Dorsolateral prefrontal cortex (tissue), 120 donors: ENCODE measurements at regions of chr2 and their contacts with region 1.

Region 1: GRCh38 chr2:48727565-48727964 is 28.0 kb downstream of the LHCGR start:
- DNase-seq: no peak
- H3K4me3 ChIP-seq: no peak overlapping the region
- H3K27ac ChIP-seq: no peak overlapping the region
- H3K27me3 ChIP-seq: no peaks in the 10 kb centered on the region
- CTCF ChIP-seq: peak in 17 of 56 donors; percentile 26 to 65 (median 47)

Region 2: GRCh38 chr2:48440103-48440390 is 287.5 kb before region 1 on chr2:
- intact Hi-C with region 1: no loop called
- DNase-seq: no peak
- H3K4me3 ChIP-seq: peak overlapping the region; percentile 70 to 100 (median 97)
- H3K27ac ChIP-seq: peak overlapping the region; percentile 47 to 99 (median 96)
- H3K27me3 ChIP-seq: no peaks in the 10 kb centered on the region
- CTCF ChIP-seq: no peak

Region 3: GRCh38 chr2:48600204-48600813 is 127.3 kb before region 1 on chr2:
- intact Hi-C with region 1: loop called (anchors 1 to 2 kb)
- DNase-seq: peak in 1 of 10 donors; percentile 6
- H3K4me3 ChIP-seq: no peak overlapping the region
- H3K27ac ChIP-seq: peak overlapping the region in 13 of 59 donors; percentile 3 to 72 (median 27)
- H3K27me3 ChIP-seq: no peaks in the 10 kb centered on the region
- CTCF ChIP-seq: peak; percentile 68 to 96 (median 81)

Region 4: DNA sequence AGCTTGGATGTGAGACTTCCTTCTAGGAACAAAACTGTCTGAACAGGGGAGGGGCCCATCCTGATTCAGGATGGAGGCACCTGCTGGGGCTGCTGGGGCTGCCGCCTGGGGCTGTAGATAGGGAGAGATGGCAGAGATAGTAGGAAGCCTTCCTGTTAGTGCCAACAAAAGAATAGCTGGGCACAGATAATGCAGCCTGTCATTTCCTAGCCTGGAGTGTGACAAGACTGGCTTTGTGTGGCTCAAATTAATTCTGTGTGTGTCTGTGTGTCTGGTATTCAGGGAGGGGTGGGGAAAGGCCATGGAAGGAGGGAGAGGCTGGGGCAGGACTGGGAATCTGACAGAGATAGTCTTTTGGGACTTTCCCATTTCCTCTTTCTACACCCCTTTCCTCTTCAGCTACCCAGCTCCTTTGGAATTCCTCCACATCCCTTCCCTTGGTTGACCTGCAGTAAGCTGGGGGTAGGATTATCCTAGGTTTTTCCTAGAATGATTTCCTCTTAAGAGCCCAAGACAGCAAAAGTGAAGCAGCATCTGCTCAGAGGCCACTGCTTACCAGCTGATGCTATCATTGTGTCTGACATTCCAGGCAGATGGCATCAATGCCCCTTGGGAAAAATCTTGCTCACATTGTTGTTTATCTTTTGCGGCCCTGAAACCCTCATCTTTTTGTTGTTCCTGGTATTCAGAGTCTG is 172.9 kb after region 1 on chr2:
- intact Hi-C with region 1: loop called in 1 of 2 experiments (anchors 10 kb)
- DNase-seq: peak in 6 of 10 donors; percentile 35 to 65 (median 46)
- H3K4me3 ChIP-seq: no peak overlapping the region
- H3K27ac ChIP-seq: peak overlapping the region in 47 of 59 donors; percentile 1 to 82 (median 58)
- H3K27me3 ChIP-seq: peaks cover 0 to 3% (median 0%) of the 10 kb centered on the region in 45 donors
- CTCF ChIP-seq: peak in 7 of 56 donors; percentile 9 to 27 (median 20)